ENCODE measurements at regions of chr21 and their contacts with region 1.

Region 1: DNA sequence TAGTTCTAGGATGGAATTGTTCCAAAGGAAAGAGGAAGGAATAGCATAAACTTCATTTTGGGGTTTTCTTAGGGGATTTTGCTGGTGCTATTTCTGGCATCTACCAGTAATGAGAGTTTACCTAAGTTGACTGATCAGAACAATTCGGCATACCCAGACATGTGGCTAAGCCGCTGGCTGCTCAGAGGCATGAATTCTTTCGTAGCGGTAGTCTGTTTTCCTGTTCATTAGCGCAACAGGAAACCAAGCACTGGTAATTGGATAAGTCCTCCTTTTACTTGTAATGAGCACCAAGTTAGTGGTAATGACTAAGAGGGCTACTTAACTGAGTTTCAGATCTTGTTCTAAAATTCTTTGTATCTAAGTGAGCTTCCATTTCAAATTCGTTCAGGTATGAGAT is 38.6 kb downstream of the C21orf91 start:
- DNase-seq: peak in 12 of 14 experiments; percentile 14 to 89 (median 44)
- ATAC-seq: peak; percentile 60
- H3K4me3 ChIP-seq: no peak overlapping the region
- H3K4me3 Mint-ChIP-seq: peak overlapping the region; percentile 62
- H3K27ac ChIP-seq: peak overlapping the region; percentile 64 to 77
- H3K27ac Mint-ChIP-seq: peak overlapping the region; percentile 93
- H3K4me1 ChIP-seq: peaks cover 57% of the 10 kb centered on the region
- H3K4me1 Mint-ChIP-seq: peaks cover 79% of the 10 kb centered on the region
- H3K27me3 ChIP-seq: no peaks in the 10 kb centered on the region
- H3K27me3 Mint-ChIP-seq: no peaks in the 10 kb centered on the region
- CTCF ChIP-seq: no peak

Region 2: GRCh38 chr21:17611414-17612022 is 169.0 kb before region 1 on chr21:
- CTCF ChIA-PET with region 1: no interaction called
- POLR2A ChIA-PET with region 1: interaction called, 5 read pairs
- intact Hi-C with region 1: loop called in 1 of 2 experiments (anchors 10 kb)
- DNase-seq: peak; percentile 54 to 92 (median 72)
- ATAC-seq: peak; percentile 69
- H3K4me3 ChIP-seq: peak overlapping the region; percentile 91
- H3K4me3 Mint-ChIP-seq: peak overlapping the region; percentile 93
- H3K27ac ChIP-seq: peak overlapping the region; percentile 58 to 60
- H3K27ac Mint-ChIP-seq: peak overlapping the region; percentile 89
- H3K4me1 ChIP-seq: peaks cover 17% of the 10 kb centered on the region
- H3K4me1 Mint-ChIP-seq: peaks cover 40% of the 10 kb centered on the region
- H3K27me3 ChIP-seq: no peaks in the 10 kb centered on the region
- H3K27me3 Mint-ChIP-seq: no peaks in the 10 kb centered on the region
- CTCF ChIP-seq: no peak

Region 3: GRCh38 chr21:17631195-17631594 is 149.3 kb before region 1 on chr21:
- CTCF ChIA-PET with region 1: no interaction called
- POLR2A ChIA-PET with region 1: no interaction called
- intact Hi-C with region 1: no loop called
- DNase-seq: no peak
- ATAC-seq: no peak
- H3K4me3 ChIP-seq: no peak overlapping the region
- H3K4me3 Mint-ChIP-seq: no peak overlapping the region
- H3K27ac ChIP-seq: no peak overlapping the region
- H3K27ac Mint-ChIP-seq: no peak overlapping the region
- H3K4me1 ChIP-seq: no peaks in the 10 kb centered on the region
- H3K4me1 Mint-ChIP-seq: no peaks in the 10 kb centered on the region
- H3K27me3 ChIP-seq: peaks cover 0 to 2% of the 10 kb centered on the region in 2 experiments
- H3K27me3 Mint-ChIP-seq: peaks cover 4% of the 10 kb centered on the region
- CTCF ChIP-seq: no peak

Region 4: GRCh38 chr21:17741806-17742550 is 38.6 kb before region 1 on chr21:
- CTCF ChIA-PET with region 1: no interaction called
- POLR2A ChIA-PET with region 1: no interaction called
- intact Hi-C with region 1: loop called in 1 of 2 experiments (anchors 5 kb)
- DNase-seq: no peak
- ATAC-seq: no peak
- H3K4me3 ChIP-seq: no peak overlapping the region
- H3K4me3 Mint-ChIP-seq: no peak overlapping the region
- H3K27ac ChIP-seq: no peak overlapping the region
- H3K27ac Mint-ChIP-seq: no peak overlapping the region
- H3K4me1 ChIP-seq: no peaks in the 10 kb centered on the region
- H3K4me1 Mint-ChIP-seq: peaks cover 4% of the 10 kb centered on the region
- H3K27me3 ChIP-seq: no peaks in the 10 kb centered on the region
- H3K27me3 Mint-ChIP-seq: no peaks in the 10 kb centered on the region
- CTCF ChIP-seq: no peak

Region 5: GRCh38 chr21:17793246-17794123 is 12.9 kb after region 1 on chr21:
- CTCF ChIA-PET with region 1: interaction called, 5 read pairs
- POLR2A ChIA-PET with region 1: interaction called, 77 read pairs
- intact Hi-C with region 1: loop called in 1 of 2 experiments (anchors 1 kb)
- DNase-seq: peak in 3 of 14 experiments; percentile 57 to 79 (median 58)
- ATAC-seq: peak; percentile 61
- H3K4me3 ChIP-seq: peak overlapping the region; percentile 48
- H3K4me3 Mint-ChIP-seq: peak overlapping the region; percentile 84
- H3K27ac ChIP-seq: peak overlapping the region; percentile 61 to 81
- H3K27ac Mint-ChIP-seq: peak overlapping the region; percentile 94
- H3K4me1 ChIP-seq: peaks cover 13% of the 10 kb centered on the region
- H3K4me1 Mint-ChIP-seq: peaks cover 78% of the 10 kb centered on the region
- H3K27me3 ChIP-seq: no peaks in the 10 kb centered on the region
- H3K27me3 Mint-ChIP-seq: no peaks in the 10 kb centered on the region
- CTCF ChIP-seq: no peak

Region 6: GRCh38 chr21:17802572-17802971 is 22.0 kb after region 1 on chr21:
- CTCF ChIA-PET with region 1: interaction called, 3 read pairs
- POLR2A ChIA-PET with region 1: interaction called, 18 read pairs
- intact Hi-C with region 1: no loop called
- DNase-seq: no peak
- ATAC-seq: no peak
- H3K4me3 ChIP-seq: no peak overlapping the region
- H3K4me3 Mint-ChIP-seq: no peak overlapping the region
- H3K27ac ChIP-seq: no peak overlapping the region
- H3K27ac Mint-ChIP-seq: peak overlapping the region; percentile 58
- H3K4me1 ChIP-seq: peaks cover 17% of the 10 kb centered on the region
- H3K4me1 Mint-ChIP-seq: peaks cover 67% of the 10 kb centered on the region
- H3K27me3 ChIP-seq: no peaks in the 10 kb centered on the region
- H3K27me3 Mint-ChIP-seq: no peaks in the 10 kb centered on the region
- CTCF ChIP-seq: no peak

Region 7: GRCh38 chr21:17813353-17813752 is 32.8 kb after region 1 on chr21:
- CTCF ChIA-PET with region 1: interaction called, 3 read pairs
- POLR2A ChIA-PET with region 1: interaction called, 167 read pairs
- intact Hi-C with region 1: loop called in 1 of 2 experiments (anchors 2 kb)
- DNase-seq: no peak
- ATAC-seq: no peak
- H3K4me3 ChIP-seq: no peak overlapping the region
- H3K4me3 Mint-ChIP-seq: no peak overlapping the region
- H3K27ac ChIP-seq: no peak overlapping the region
- H3K27ac Mint-ChIP-seq: peak overlapping the region; percentile 31
- H3K4me1 ChIP-seq: peaks cover 22% of the 10 kb centered on the region
- H3K4me1 Mint-ChIP-seq: peaks cover 77% of the 10 kb centered on the region
- H3K27me3 ChIP-seq: no peaks in the 10 kb centered on the region
- H3K27me3 Mint-ChIP-seq: no peaks in the 10 kb centered on the region
- CTCF ChIP-seq: no peak

Region 8: DNA sequence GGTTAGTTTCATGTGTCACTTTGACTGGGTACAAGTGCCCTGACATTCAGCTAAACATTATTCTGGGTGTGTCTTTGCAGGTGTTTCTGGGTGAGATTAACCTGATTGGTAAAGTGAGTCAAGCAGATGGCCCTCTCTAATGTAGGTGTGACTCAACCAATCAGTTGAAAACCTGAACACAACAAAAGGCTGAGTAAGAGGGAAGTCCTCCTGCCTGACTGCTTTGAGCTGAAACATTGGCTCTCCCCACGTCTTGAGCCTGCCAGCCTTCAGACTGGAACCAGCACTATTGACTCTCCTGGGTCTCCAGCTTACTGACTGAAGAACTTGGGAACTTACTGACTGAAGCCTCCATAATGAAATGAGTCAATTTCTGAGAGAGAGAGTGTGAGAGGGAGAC is 108.6 kb after region 1 on chr21:
- CTCF ChIA-PET with region 1: no interaction called
- POLR2A ChIA-PET with region 1: no interaction called
- intact Hi-C with region 1: no loop called
- DNase-seq: no peak
- ATAC-seq: no peak
- H3K4me3 ChIP-seq: no peak overlapping the region
- H3K4me3 Mint-ChIP-seq: no peak overlapping the region
- H3K27ac ChIP-seq: no peak overlapping the region
- H3K27ac Mint-ChIP-seq: no peak overlapping the region
- H3K4me1 ChIP-seq: no peaks in the 10 kb centered on the region
- H3K4me1 Mint-ChIP-seq: no peaks in the 10 kb centered on the region
- H3K27me3 ChIP-seq: no peaks in the 10 kb centered on the region
- H3K27me3 Mint-ChIP-seq: no peaks in the 10 kb centered on the region
- CTCF ChIP-seq: no peak

Measured in CD4-positive, alpha-beta T cell (primary cell).